Gastrocnemius medialis (tissue), 4 donors: ENCODE measurements at regions of chr3 and their contacts with region 1.

Region 1: GRCh38 chr3:12750223-12750622 is 8.8 kb downstream of the TMEM40 start:
- DNase-seq: peak; percentile 27 to 70
- ATAC-seq: peak; percentile 51 to 67
- H3K4me3 ChIP-seq: no peak overlapping the region
- H3K27ac ChIP-seq: peak overlapping the region; percentile 75 to 81 (median 78)
- H3K4me1 ChIP-seq: peaks cover 19 to 29% of the 10 kb centered on the region in 2 donors
- H3K27me3 ChIP-seq: no peaks in the 10 kb centered on the region
- CTCF ChIP-seq: no peak
- POLR2A ChIP-seq: no peak

Region 2: DNA sequence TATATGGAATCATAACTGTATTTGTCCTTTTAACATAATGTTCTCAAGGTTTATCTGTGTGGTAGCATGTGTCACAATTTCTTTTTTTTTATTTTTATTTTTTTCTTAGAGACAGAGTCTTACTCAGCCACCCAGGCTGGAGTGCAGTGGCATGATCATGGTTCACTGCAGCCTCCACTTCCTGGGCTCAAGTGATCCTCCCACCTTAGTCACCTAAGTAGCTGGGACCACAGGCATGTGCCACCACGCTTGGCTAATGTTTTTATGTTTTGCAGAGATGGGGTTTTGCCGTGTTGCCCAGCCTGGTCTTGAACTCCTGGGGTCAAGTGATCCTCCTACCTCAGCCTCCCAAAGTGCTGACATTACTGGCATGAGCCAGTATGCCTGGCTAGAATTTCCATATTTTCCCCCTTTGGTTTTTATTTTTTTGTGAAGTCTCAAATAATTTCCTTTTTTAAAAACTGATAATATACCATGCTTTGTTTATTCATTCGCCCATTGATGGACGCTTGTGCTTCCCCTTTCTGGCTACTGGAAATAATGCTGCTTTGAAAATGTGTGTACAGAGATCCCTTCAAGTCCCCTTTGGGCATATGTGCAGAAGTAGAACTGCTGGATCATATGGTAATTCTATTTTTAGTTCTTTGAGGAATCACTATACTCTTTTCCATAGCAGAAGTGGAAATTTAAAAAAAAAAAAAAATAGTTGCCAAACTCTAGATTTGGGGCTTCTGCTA is 19.5 kb before region 1 on chr3:
- in situ Hi-C with region 1: no loop called
- intact Hi-C with region 1: loop called (anchors 1 kb)
- DNase-seq: no peak
- ATAC-seq: no peak
- H3K4me3 ChIP-seq: no peak overlapping the region
- H3K27ac ChIP-seq: peak overlapping the region in 3 of 4 donors; percentile 86 to 90 (median 90)
- H3K4me1 ChIP-seq: peaks cover 24 to 26% of the 10 kb centered on the region in 2 donors
- H3K27me3 ChIP-seq: no peaks in the 10 kb centered on the region
- CTCF ChIP-seq: no peak
- POLR2A ChIP-seq: no peak

Region 3: GRCh38 chr3:13850158-13850945 is 1100.1 kb after region 1 on chr3:
- in situ Hi-C with region 1: no loop called
- intact Hi-C with region 1: no loop called
- DNase-seq: no peak
- ATAC-seq: no peak
- H3K4me3 ChIP-seq: no peak overlapping the region
- H3K27ac ChIP-seq: no peak overlapping the region
- H3K4me1 ChIP-seq: no peaks in the 10 kb centered on the region
- H3K27me3 ChIP-seq: peaks cover 0 to 6% (median 1%) of the 10 kb centered on the region in 3 donors
- CTCF ChIP-seq: no peak
- POLR2A ChIP-seq: no peak